Activated CD4-positive, alpha-beta T cell treated with anti-CD3 and anti-CD28 coated beads, Interleukin-2, amount 10 ng/mL, durations not matched to agents 7 days and 5 days (primary cell): ENCODE measurements at regions of chr5 and their contacts with region 1.

Region 1: GRCh38 chr5:80834710-80835109 is 125.5 kb upstream of the RASGRF2 start:
- DNase-seq: no peak
- H3K4me3 Mint-ChIP-seq: no peak overlapping the region
- H3K27ac Mint-ChIP-seq: no peak overlapping the region
- H3K4me1 Mint-ChIP-seq: peaks cover 18% of the 10 kb centered on the region
- H3K27me3 Mint-ChIP-seq: no peaks in the 10 kb centered on the region

Region 2: GRCh38 chr5:80852331-80853245 is 17.9 kb after region 1 on chr5:
- CTCF ChIA-PET with region 1: interaction called, 10 read pairs
- POLR2A ChIA-PET with region 1: no interaction called
- DNase-seq: peak; percentile 8
- H3K4me3 Mint-ChIP-seq: no peak overlapping the region
- H3K27ac Mint-ChIP-seq: no peak overlapping the region
- H3K4me1 Mint-ChIP-seq: peaks cover 17% of the 10 kb centered on the region
- H3K27me3 Mint-ChIP-seq: no peaks in the 10 kb centered on the region